Activated B cell treated with CpG ODN at 0.5 μM for 24 hours (primary cell): ENCODE measurements at regions of chr14 and their contacts with region 1.

Region 1: GRCh38 chr14:21071225-21072030 is 1.3 kb downstream of the ARHGEF40 start:
- DNase-seq: peak; percentile 63
- ATAC-seq: peak; percentile 72
- H3K4me3 Mint-ChIP-seq: peak overlapping the region; percentile 83
- H3K27ac Mint-ChIP-seq: peak overlapping the region; percentile 41
- H3K4me1 Mint-ChIP-seq: peaks cover 42% of the 10 kb centered on the region
- H3K27me3 Mint-ChIP-seq: peaks cover 11% of the 10 kb centered on the region
- CTCF ChIP-seq: no peak

Region 2: GRCh38 chr14:20632682-20633428 is 438.6 kb before region 1 on chr14:
- CTCF ChIA-PET with region 1: no interaction called
- POLR2A ChIA-PET with region 1: no interaction called
- intact Hi-C with region 1: loop called (anchors 10 kb)
- DNase-seq: no peak
- ATAC-seq: peak; percentile 72
- H3K4me3 Mint-ChIP-seq: peak overlapping the region; percentile 82
- H3K27ac Mint-ChIP-seq: peak overlapping the region; percentile 89
- H3K4me1 Mint-ChIP-seq: peaks cover 50% of the 10 kb centered on the region
- H3K27me3 Mint-ChIP-seq: peaks cover 30% of the 10 kb centered on the region
- CTCF ChIP-seq: no peak

Region 3: DNA sequence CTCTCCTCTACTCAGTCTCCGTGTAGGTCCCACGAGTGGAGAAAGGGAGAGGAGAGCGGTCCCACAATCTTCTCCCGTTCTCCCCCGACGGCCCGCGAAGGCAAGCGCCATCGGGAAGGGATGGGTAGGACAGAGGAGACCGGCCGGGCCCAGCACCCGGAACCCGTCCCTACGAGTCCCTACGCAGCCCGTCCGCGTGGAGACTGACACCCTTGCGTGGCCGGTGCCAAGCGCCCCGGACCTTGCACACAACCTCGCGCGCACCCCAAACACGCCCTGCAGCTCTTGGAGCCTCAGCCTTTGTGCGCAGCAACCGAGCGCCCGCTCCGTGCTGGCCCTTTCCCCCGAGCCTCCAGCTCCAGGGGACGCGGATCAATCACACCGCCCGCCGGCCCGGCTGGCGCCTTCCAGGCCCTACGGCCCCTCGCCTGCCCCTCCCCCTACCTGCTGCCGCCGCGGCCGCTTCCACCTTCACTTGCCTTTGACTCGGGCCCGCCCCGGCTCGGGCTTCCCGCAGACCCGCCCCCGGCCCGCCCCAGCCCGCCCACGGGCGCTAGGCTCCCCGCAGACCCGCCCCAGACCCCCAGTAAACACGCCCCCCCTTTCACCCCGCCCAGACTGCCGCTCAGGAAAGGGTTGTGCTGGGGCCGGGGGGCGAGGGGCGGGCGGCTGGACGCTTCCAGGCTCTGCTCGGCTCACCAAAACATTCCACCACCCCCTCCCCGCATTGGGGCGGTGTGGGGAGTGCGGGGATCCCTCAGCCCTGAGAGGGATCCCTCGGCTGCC is 46.6 kb before region 1 on chr14 and contains the start of gene NDRG2:
- CTCF ChIA-PET with region 1: no interaction called
- POLR2A ChIA-PET with region 1: no interaction called
- intact Hi-C with region 1: loop called (anchors 2 kb)
- DNase-seq: peak; percentile 64
- ATAC-seq: peak; percentile 92
- H3K4me3 Mint-ChIP-seq: peak within 1 kb of the TSS; percentile 88
- H3K27ac Mint-ChIP-seq: peak within 1 kb of the TSS; percentile 8
- H3K4me1 Mint-ChIP-seq: peaks cover 18% of the 10 kb centered on the region
- H3K27me3 Mint-ChIP-seq: peaks cover 25% of the 10 kb centered on the region
- CTCF ChIP-seq: no peak
- total RNA-seq, gene NDRG2: 2.1 and 3.9 TPM in 2 replicates

Region 4: DNA sequence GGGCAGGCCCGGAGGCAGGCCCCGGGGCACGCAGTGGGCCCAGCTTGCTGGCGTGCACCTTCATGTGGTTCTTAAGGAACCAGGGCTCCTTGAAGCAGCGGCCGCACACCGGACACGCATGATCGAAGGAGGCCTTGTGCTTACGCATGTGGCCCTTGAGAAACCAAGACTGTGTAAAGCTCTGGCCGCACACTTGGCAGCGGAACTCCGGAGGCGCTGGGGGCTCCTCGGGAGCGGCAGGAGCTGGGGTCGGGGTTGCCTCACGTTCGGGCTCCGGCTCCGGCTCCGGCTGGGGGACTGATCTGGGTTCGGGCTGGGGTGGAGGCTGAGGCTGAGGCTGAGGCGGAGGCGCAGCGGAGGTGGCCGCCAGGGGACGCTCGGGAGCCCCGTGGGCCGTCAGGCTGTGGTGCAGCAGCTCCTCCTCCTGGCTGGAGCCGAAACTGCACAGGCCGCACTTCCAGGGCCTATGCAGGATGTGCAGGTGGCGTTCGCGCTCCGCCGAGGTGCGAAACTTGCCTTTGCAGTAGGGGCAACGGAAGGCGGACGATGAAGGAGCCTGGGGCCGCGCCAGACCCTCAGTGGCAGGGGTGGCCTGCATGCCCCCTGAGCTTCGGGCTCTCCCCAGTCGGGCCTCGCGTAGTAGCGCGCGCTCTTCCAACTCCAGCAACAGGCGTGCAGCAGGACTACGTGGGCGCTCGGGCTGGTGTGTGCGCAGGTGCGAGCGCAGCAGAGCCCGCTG is 21.0 kb after region 1 on chr14:
- CTCF ChIA-PET with region 1: interaction called, 62 read pairs
- POLR2A ChIA-PET with region 1: interaction called, 9 read pairs
- intact Hi-C with region 1: loop called (anchors 1 kb)
- DNase-seq: peak; percentile 94
- ATAC-seq: peak; percentile 99
- H3K4me3 Mint-ChIP-seq: no peak overlapping the region
- H3K27ac Mint-ChIP-seq: no peak overlapping the region
- H3K4me1 Mint-ChIP-seq: peaks cover 18% of the 10 kb centered on the region
- H3K27me3 Mint-ChIP-seq: no peaks in the 10 kb centered on the region
- CTCF ChIP-seq: peak; percentile 98

Region 5: GRCh38 chr14:21098076-21098891 is 26.9 kb after region 1 on chr14 and contains the start of gene ZNF219:
- CTCF ChIA-PET with region 1: interaction called, 146 read pairs
- POLR2A ChIA-PET with region 1: interaction called, 29 read pairs
- intact Hi-C with region 1: no loop called
- DNase-seq: peak; percentile 43
- ATAC-seq: peak; percentile 60
- H3K4me3 Mint-ChIP-seq: peak within 1 kb of the TSS; percentile 76
- H3K27ac Mint-ChIP-seq: no peak within 1 kb of the TSS
- H3K4me1 Mint-ChIP-seq: peaks cover 14% of the 10 kb centered on the region
- H3K27me3 Mint-ChIP-seq: peaks cover 12% of the 10 kb centered on the region
- CTCF ChIP-seq: no peak
- total RNA-seq, gene ZNF219: 1.6 and 2.3 TPM in 2 replicates

Region 6: DNA sequence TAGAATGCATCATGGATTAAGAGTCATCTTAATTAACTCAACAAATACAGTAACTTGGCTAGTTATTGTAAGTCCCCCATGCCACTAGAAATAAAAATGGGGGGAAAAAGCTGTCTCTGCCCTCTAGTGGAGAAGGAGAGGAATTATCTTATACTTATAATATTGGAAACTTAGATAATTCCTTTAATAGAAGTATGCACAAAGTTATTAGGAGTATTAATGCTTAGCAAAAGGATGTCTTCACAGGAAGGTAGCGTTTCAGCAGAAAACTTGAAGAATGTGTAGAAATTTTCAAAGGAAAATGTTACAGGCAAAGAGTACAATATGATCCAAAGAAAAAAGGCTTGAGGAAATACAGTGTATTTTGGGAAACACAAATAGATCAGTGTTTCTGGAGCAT is 64.6 kb after region 1 on chr14:
- CTCF ChIA-PET with region 1: interaction called, 3 read pairs
- POLR2A ChIA-PET with region 1: no interaction called
- intact Hi-C with region 1: loop called (anchors 1 kb)
- DNase-seq: no peak
- ATAC-seq: no peak
- H3K4me3 Mint-ChIP-seq: no peak overlapping the region
- H3K27ac Mint-ChIP-seq: no peak overlapping the region
- H3K4me1 Mint-ChIP-seq: no peaks in the 10 kb centered on the region
- H3K27me3 Mint-ChIP-seq: peaks cover 7% of the 10 kb centered on the region
- CTCF ChIP-seq: no peak